SK-N-SH (cell line): ENCODE measurements at regions of chr7 and their contacts with region 1.

Region 1: GRCh38 chr7:19107356-19108146 is 9.9 kb downstream of the TWIST1 start:
- DNase-seq: peak; percentile 77
- H3K4me3 ChIP-seq: peak overlapping the region; percentile 92 to 100
- H3K27ac ChIP-seq: peak overlapping the region; percentile 96 to 100
- H3K4me1 ChIP-seq: peaks cover 21 to 79% of the 10 kb centered on the region in 2 experiments; a peak in 3 of 4 replicates
- H3K27me3 ChIP-seq: no peaks in the 10 kb centered on the region
- CTCF ChIP-seq: no peak
- EP300 ChIP-seq: peak in 1 of 2 experiments; percentile 97; a peak in 3 of 4 replicates
- RAD21 ChIP-seq: no peak; the same call in 1 of the 2 replicates

Region 2: GRCh38 chr7:18700147-18700546 is 407.4 kb before region 1 on chr7:
- CTCF ChIA-PET with region 1: interaction called, 5 read pairs
- POLR2A ChIA-PET with region 1: interaction called, 30 read pairs
- DNase-seq: no peak
- H3K4me3 ChIP-seq: no peak overlapping the region
- H3K27ac ChIP-seq: peak overlapping the region in 1 of 2 experiments; percentile 100; a peak in 2 of 4 replicates
- H3K4me1 ChIP-seq: peaks cover 0 to 61% of the 10 kb centered on the region in 2 experiments; a peak in 3 of 4 replicates
- H3K27me3 ChIP-seq: no peaks in the 10 kb centered on the region
- CTCF ChIP-seq: peak; percentile 44
- EP300 ChIP-seq: no peak
- RAD21 ChIP-seq: no peak

Region 3: DNA sequence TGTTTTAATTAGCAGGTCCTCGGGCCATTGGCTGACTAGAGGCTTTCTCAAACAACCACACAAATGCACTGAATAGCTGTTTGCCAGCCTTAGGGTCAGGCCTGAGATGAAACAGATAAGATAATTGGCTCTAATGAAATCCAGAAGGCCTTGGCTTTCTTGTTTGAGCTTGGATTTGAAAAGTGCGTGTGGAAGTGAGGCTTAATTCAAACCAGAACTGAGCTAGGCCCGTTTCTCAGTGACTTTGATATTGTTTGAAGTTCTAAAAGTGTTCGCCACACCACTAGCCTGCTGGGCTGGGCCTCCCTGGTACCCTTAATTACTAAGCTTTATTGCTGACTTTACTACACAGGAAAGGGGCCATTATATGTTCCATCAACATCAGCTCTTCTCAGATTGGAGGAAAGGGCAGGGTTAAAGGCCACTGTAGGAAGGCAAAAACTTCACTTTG is 260.8 kb before region 1 on chr7:
- CTCF ChIA-PET with region 1: interaction called, 3 read pairs
- POLR2A ChIA-PET with region 1: interaction called, 46 read pairs
- DNase-seq: peak; percentile 75
- H3K4me3 ChIP-seq: no peak overlapping the region
- H3K27ac ChIP-seq: peak overlapping the region; percentile 60 to 100; a peak in 3 of 4 replicates
- H3K4me1 ChIP-seq: peaks cover 23 to 52% of the 10 kb centered on the region in 2 experiments
- H3K27me3 ChIP-seq: no peaks in the 10 kb centered on the region
- CTCF ChIP-seq: no peak
- EP300 ChIP-seq: peak; percentile 96 to 100
- RAD21 ChIP-seq: peak; percentile 60

Region 4: DNA sequence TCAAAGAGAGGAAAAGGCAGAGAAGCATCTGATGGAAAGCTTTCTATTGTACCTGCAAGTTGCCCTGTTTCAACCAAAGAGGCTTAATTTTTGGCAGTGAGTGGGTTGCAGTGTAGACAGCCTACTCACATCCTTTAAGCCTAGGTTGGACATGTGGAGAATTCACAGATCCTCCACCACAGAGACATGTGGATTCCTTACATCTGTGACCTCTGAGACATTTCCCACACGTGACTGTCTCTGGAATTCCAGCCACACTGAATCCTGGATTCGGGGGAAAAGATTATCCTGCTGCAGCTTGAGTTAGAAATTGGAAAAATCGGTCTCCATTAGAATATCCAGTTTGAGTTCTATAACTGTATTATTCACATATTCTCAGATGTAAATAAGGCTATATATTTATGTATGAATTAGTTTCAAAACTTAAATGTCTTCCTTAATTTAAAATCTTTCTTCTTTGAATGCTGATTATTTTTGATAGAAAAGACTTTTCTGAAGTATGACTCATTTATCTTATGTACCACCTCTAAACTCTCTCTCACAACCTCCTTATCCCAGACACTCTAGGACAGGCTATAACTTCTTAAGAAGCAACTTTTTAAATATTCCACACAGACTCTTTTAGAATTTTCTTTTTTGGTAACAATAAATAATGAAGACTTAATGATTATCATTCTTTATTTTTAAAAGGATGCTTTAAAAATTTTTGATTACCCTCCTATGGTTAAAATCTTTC is 113.5 kb before region 1 on chr7:
- CTCF ChIA-PET with region 1: interaction called, 5 read pairs
- POLR2A ChIA-PET with region 1: interaction called, 10 read pairs
- DNase-seq: peak; percentile 37
- H3K4me3 ChIP-seq: peak overlapping the region in 1 of 2 experiments; percentile 33; a peak in 2 of 4 replicates
- H3K27ac ChIP-seq: peak overlapping the region; percentile 93 to 99
- H3K4me1 ChIP-seq: peaks cover 25 to 48% of the 10 kb centered on the region in 2 experiments; a peak in 3 of 4 replicates
- H3K27me3 ChIP-seq: no peaks in the 10 kb centered on the region
- CTCF ChIP-seq: no peak
- EP300 ChIP-seq: peak; percentile 73 to 96
- RAD21 ChIP-seq: peak; percentile 24; the same call in 1 of the 2 replicates

Region 5: DNA sequence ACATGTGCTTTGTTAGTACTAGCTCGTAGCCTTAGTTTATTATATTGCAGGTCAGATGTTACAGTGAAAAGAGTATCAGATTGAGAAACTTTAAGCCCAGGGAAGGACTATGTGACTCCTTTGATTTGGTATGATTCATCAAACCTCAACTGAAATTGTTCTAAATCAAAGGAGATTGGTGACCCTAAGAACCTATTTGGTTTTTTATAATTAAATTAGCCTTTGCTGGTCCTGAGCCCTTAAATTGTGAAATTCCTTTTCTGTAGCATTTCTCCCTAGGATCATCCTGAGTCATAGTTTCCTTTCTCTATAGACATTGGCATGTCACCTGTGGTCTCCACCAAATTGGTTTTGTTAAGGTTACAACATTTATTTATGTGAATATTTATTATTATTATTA is 511.6 kb after region 1 on chr7:
- CTCF ChIA-PET with region 1: no interaction called
- POLR2A ChIA-PET with region 1: no interaction called
- DNase-seq: no peak
- H3K4me3 ChIP-seq: no peak overlapping the region
- H3K27ac ChIP-seq: no peak overlapping the region
- H3K4me1 ChIP-seq: no peaks in the 10 kb centered on the region
- H3K27me3 ChIP-seq: no peaks in the 10 kb centered on the region
- CTCF ChIP-seq: no peak
- EP300 ChIP-seq: no peak
- RAD21 ChIP-seq: no peak